T-cell (primary cell): ENCODE measurements at regions of chr10 and their contacts with region 1.

Region 1: GRCh38 chr10:124688889-124689670 is 55.1 kb downstream of the FAM53B start:
- DNase-seq: peak in 28 of 35 experiments; percentile 20 to 80 (median 43)
- ATAC-seq: peak; percentile 79 to 88 (median 80)
- H3K4me3 ChIP-seq: no peak overlapping the region
- H3K4me3 Mint-ChIP-seq: peak overlapping the region in 2 of 3 donors; percentile 34 to 46
- H3K27ac ChIP-seq: peak overlapping the region; percentile 61
- H3K27ac Mint-ChIP-seq: peak overlapping the region; percentile 91 to 93
- H3K4me1 ChIP-seq: peaks cover 16 to 95% of the 10 kb centered on the region in 2 experiments
- H3K4me1 Mint-ChIP-seq: peaks cover 61 to 87% (median 79%) of the 10 kb centered on the region in 3 donors
- H3K27me3 ChIP-seq: no peaks in the 10 kb centered on the region
- H3K27me3 Mint-ChIP-seq: no peaks in the 10 kb centered on the region

Region 2: DNA sequence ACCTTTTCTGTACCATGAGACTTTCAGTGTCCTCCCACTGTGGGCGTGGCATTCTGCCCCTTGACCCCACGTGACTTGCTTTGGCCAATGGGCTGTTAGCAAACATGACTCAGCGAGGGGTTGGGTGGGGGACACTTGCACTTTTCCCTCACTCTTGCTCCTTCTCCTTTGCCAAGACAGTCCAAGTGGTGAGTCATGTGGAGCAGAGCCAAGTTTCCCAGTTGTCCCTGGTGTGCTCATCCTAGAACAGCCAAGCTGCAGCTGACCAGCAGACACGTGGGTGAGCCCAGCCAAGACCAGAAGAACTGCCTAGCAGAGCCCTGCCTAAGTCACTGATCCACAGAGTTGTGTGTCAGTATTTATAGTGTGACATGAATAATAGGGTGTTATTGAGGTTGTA is 714.7 kb before region 1 on chr10:
- CTCF ChIA-PET with region 1: no interaction called
- POLR2A ChIA-PET with region 1: no interaction called
- DNase-seq: no peak
- ATAC-seq: no peak
- H3K4me3 ChIP-seq: no peak overlapping the region
- H3K4me3 Mint-ChIP-seq: no peak overlapping the region
- H3K27ac ChIP-seq: no peak overlapping the region
- H3K27ac Mint-ChIP-seq: no peak overlapping the region
- H3K4me1 ChIP-seq: no peaks in the 10 kb centered on the region
- H3K4me1 Mint-ChIP-seq: peaks cover 0 to 18% (median 3%) of the 10 kb centered on the region in 3 donors
- H3K27me3 ChIP-seq: peaks cover 11 to 45% of the 10 kb centered on the region in 2 experiments
- H3K27me3 Mint-ChIP-seq: peaks cover 67 to 73% of the 10 kb centered on the region in 2 donors

Region 3: DNA sequence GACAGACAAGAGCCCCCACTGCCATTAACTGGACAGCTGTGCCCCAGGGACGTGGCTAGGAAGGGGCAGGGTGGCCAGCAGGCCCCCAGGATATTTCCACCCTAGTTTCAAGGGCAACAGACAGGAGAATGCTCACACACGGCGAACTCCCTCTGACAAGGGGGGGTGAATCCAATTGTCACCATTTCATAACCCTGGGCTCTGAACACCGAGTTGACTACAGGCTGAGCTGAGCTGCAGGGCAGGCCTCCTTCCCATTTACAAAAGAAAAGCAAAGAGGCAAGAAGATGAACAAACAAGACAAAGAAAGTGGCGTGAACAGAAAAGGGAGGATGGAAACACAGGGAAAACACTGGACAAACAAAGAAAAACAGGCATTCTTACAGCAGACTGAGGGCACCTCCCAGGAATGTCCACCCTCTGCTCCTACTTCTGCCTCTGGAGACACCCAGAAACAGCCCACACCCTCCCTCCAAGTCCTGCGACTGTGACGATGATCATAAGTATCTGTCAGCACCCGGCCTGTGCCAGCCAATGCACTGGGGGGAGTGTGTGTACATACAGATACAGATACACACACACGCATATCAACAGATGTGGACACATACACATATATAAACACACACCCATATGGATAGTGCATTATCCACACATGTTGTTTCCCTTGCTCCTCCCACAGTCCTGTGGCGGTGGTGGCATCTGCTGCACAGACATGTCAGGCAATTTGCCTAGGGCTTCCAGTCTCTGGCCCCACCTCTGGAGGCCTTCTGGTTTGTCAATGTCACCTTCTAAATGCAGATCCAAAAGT is 11.1 kb before region 1 on chr10:
- CTCF ChIA-PET with region 1: interaction called, 3 to 12 read pairs
- POLR2A ChIA-PET with region 1: interaction called, 4 to 8 read pairs
- DNase-seq: peak in 1 of 35 experiments; percentile 23
- ATAC-seq: peak in 3 of 4 experiments; percentile 12 to 28 (median 14)
- H3K4me3 ChIP-seq: peak overlapping the region; percentile 3 to 32
- H3K4me3 Mint-ChIP-seq: peak overlapping the region; percentile 61 to 88 (median 66)
- H3K27ac ChIP-seq: peak overlapping the region; percentile 67
- H3K27ac Mint-ChIP-seq: peak overlapping the region; percentile 96 to 97
- H3K4me1 ChIP-seq: peaks cover 62 to 97% of the 10 kb centered on the region in 2 experiments
- H3K4me1 Mint-ChIP-seq: peaks cover 81 to 92% (median 87%) of the 10 kb centered on the region in 3 donors
- H3K27me3 ChIP-seq: no peaks in the 10 kb centered on the region
- H3K27me3 Mint-ChIP-seq: no peaks in the 10 kb centered on the region